ENCODE measurements at regions of chr22 and their contacts with region 1.

Region 1: GRCh38 chr22:41256254-41256897 is 15.6 kb upstream of the CHADL start:
- DNase-seq: peak; percentile 81
- H3K4me3 ChIP-seq: no peak overlapping the region
- H3K27ac ChIP-seq: no peak overlapping the region
- H3K4me1 ChIP-seq: peaks cover 13% of the 10 kb centered on the region
- H3K27me3 ChIP-seq: no peaks in the 10 kb centered on the region
- CTCF ChIP-seq: peak; percentile 18 to 55

Region 2: GRCh38 chr22:41526837-41527799 is 270.7 kb after region 1 on chr22:
- CTCF ChIA-PET with region 1: no interaction called
- dilution Hi-C with region 1: no loop called
- in situ Hi-C with region 1: no loop called
- intact Hi-C with region 1: loop called (anchors 1 kb)
- DNase-seq: no peak
- H3K4me3 ChIP-seq: no peak overlapping the region
- H3K27ac ChIP-seq: no peak overlapping the region
- H3K4me1 ChIP-seq: peaks cover 6% of the 10 kb centered on the region
- H3K27me3 ChIP-seq: no peaks in the 10 kb centered on the region
- CTCF ChIP-seq: peak; percentile 78 to 86

Measured in mammary epithelial cell (primary cell).